Ascending aorta (tissue), 2 donors: ENCODE measurements at regions of chrX and their contacts with region 1.

Region 1: GRCh38 chrX:148269513-148269912 is 230.9 kb upstream of the AFF2 start:
- DNase-seq: no peak
- H3K4me3 ChIP-seq: no peak overlapping the region
- H3K27ac ChIP-seq: no peak overlapping the region
- H3K4me1 ChIP-seq: no peaks in the 10 kb centered on the region
- H3K27me3 ChIP-seq: no peaks in the 10 kb centered on the region
- CTCF ChIP-seq: no peak

Region 2: GRCh38 chrX:148204195-148204594 is 65.3 kb before region 1 on chrX:
- intact Hi-C with region 1: loop called (anchors 10 kb)
- DNase-seq: no peak
- H3K4me3 ChIP-seq: no peak overlapping the region
- H3K27ac ChIP-seq: no peak overlapping the region
- H3K4me1 ChIP-seq: no peaks in the 10 kb centered on the region
- H3K27me3 ChIP-seq: no peaks in the 10 kb centered on the region
- CTCF ChIP-seq: no peak

Region 3: GRCh38 chrX:149114001-149114400 is 844.5 kb after region 1 on chrX:
- intact Hi-C with region 1: no loop called
- DNase-seq: no peak
- H3K4me3 ChIP-seq: no peak overlapping the region
- H3K27ac ChIP-seq: no peak overlapping the region
- H3K4me1 ChIP-seq: no peaks in the 10 kb centered on the region
- H3K27me3 ChIP-seq: no peaks in the 10 kb centered on the region
- CTCF ChIP-seq: no peak